Spleen (tissue), 13 donors: ENCODE measurements at regions of chr5 and their contacts with region 1.

Region 1: DNA sequence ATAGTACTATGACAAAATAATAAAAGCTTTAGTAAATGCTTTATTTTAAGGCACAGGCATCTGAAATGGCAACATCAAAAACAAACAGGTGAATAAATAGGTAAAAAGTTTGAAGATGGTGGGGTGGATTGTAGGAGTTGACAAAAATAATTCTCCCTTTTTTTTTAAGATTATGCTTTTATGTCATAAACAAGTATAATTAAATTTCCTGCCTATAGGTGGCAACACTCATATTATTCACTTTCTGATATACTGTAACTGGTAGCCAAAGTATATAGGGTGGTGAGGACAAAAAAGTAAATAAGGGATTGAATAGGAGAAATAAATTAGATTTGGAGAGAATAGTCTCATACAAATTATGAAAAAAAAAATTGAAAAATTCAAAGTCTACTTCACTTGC is 120.0 kb upstream of the ACOT12 start:
- DNase-seq: no peak
- H3K4me3 ChIP-seq: no peak overlapping the region
- H3K27ac ChIP-seq: no peak overlapping the region
- H3K4me1 ChIP-seq: peaks cover 0 to 8% (median 0%) of the 10 kb centered on the region in 6 donors
- H3K27me3 ChIP-seq: no peaks in the 10 kb centered on the region
- CTCF ChIP-seq: peak in 4 of 11 experiments; percentile 14 to 27 (median 22)
- POLR2A ChIP-seq: no peak

Region 2: GRCh38 chr5:81115261-81115660 is 398.7 kb before region 1 on chr5:
- intact Hi-C with region 1: no loop called
- DNase-seq: no peak
- H3K4me3 ChIP-seq: no peak overlapping the region
- H3K27ac ChIP-seq: no peak overlapping the region
- H3K4me1 ChIP-seq: no peaks in the 10 kb centered on the region
- H3K27me3 ChIP-seq: no peaks in the 10 kb centered on the region
- CTCF ChIP-seq: no peak
- POLR2A ChIP-seq: no peak

Region 3: GRCh38 chr5:81851481-81852178 is 337.6 kb after region 1 on chr5:
- intact Hi-C with region 1: loop called (anchors 5 kb)
- DNase-seq: peak; percentile 98
- H3K4me3 ChIP-seq: peak overlapping the region; percentile 41 to 75 (median 50)
- H3K27ac ChIP-seq: peak overlapping the region; percentile 85 to 93 (median 90)
- H3K4me1 ChIP-seq: peaks cover 19 to 36% (median 32%) of the 10 kb centered on the region in 6 donors
- H3K27me3 ChIP-seq: no peaks in the 10 kb centered on the region
- CTCF ChIP-seq: peak in 2 of 11 experiments; percentile 5 to 27
- POLR2A ChIP-seq: peak in 1 of 3 donors; percentile 32